WTC11 (cell line): ENCODE measurements at regions of chr11 and their contacts with region 1.

Region 1: GRCh38 chr11:66222358-66223149 is 45.9 kb upstream of the RAB1B start:
- DNase-seq: peak; percentile 94
- ATAC-seq: peak; percentile 96
- H3K4me3 Mint-ChIP-seq: no peak overlapping the region
- H3K27ac Mint-ChIP-seq: peak overlapping the region; percentile 58
- H3K4me1 Mint-ChIP-seq: peaks cover 8% of the 10 kb centered on the region
- H3K27me3 Mint-ChIP-seq: no peaks in the 10 kb centered on the region
- CTCF ChIP-seq: peak; percentile 100

Region 2: DNA sequence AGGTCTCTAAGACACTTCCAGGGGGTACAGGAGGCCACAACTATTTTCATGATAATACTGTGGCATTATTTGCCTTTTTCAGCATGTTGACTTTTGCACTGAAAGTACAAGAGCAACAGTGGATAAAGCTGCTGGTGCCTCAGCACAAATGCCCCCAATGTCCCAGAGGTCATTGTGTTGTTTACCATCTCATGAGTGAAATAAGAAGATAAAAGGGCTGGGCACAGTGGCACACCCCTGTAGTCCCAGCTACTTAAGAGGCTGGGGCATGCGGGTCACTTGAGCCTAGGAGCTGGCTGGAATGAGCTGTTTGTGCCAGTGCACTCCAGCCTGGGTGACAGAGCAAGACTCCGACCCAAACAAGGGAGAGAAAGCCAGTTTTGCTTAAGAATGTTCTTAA is 26.7 kb before region 1 on chr11:
- CTCF ChIA-PET with region 1: interaction called, 10 read pairs
- POLR2A ChIA-PET with region 1: no interaction called
- DNase-seq: no peak
- ATAC-seq: no peak
- H3K4me3 Mint-ChIP-seq: no peak overlapping the region
- H3K27ac Mint-ChIP-seq: no peak overlapping the region
- H3K4me1 Mint-ChIP-seq: peaks cover 6% of the 10 kb centered on the region; the same call in 1 of the 2 replicates
- H3K27me3 Mint-ChIP-seq: no peaks in the 10 kb centered on the region
- CTCF ChIP-seq: no peak

Region 3: DNA sequence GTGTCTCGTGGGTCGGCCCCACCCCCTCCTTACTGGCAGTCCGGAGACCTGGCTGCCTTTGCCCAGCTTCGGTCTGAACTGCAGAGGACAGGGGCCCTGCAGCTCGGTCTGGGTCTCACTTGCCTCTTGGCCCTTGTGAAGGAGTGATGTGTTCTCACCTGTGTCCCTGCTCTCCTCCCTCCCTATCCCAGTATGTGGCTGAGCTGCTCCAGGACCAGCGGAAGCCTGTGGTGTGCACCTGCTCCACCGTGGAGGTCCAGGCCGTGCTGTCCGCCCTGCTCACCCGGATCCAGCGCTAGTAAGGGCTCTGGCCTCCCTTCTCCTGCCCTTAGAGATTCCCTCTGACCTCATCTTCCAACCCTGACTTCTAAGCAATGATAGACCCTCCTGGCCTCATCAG is 10.2 kb after region 1 on chr11:
- CTCF ChIA-PET with region 1: interaction called, 30 read pairs
- POLR2A ChIA-PET with region 1: no interaction called
- DNase-seq: no peak
- ATAC-seq: no peak
- H3K4me3 Mint-ChIP-seq: no peak overlapping the region
- H3K27ac Mint-ChIP-seq: no peak overlapping the region
- H3K4me1 Mint-ChIP-seq: peaks cover 19% of the 10 kb centered on the region
- H3K27me3 Mint-ChIP-seq: no peaks in the 10 kb centered on the region
- CTCF ChIP-seq: no peak

Region 4: GRCh38 chr11:66239998-66240780 is 17.6 kb after region 1 on chr11:
- CTCF ChIA-PET with region 1: interaction called, 30 read pairs
- POLR2A ChIA-PET with region 1: no interaction called
- DNase-seq: no peak
- ATAC-seq: peak; percentile 27
- H3K4me3 Mint-ChIP-seq: no peak overlapping the region
- H3K27ac Mint-ChIP-seq: peak overlapping the region; percentile 25; the same call in 1 of the 2 replicates
- H3K4me1 Mint-ChIP-seq: no peaks in the 10 kb centered on the region
- H3K27me3 Mint-ChIP-seq: no peaks in the 10 kb centered on the region
- CTCF ChIP-seq: no peak

Region 5: GRCh38 chr11:66268283-66268951 is 45.9 kb after region 1 on chr11 and contains the start of gene RAB1B:
- CTCF ChIA-PET with region 1: interaction called, 31 read pairs
- POLR2A ChIA-PET with region 1: interaction called, 4 read pairs
- DNase-seq: peak; percentile 100
- ATAC-seq: peak; percentile 83
- H3K4me3 Mint-ChIP-seq: peak within 1 kb of the TSS; percentile 97
- H3K27ac Mint-ChIP-seq: peak within 1 kb of the TSS; percentile 99
- H3K4me1 Mint-ChIP-seq: peaks cover 12% of the 10 kb centered on the region
- H3K27me3 Mint-ChIP-seq: no peaks in the 10 kb centered on the region; the same call in 1 of the 2 replicates
- CTCF ChIP-seq: no peak
- total RNA-seq, gene RAB1B: 125 to 134 TPM (median 130 TPM) in 3 replicates

Region 6: GRCh38 chr11:66282468-66283386 is 60.2 kb after region 1 on chr11:
- CTCF ChIA-PET with region 1: interaction called, 36 read pairs
- POLR2A ChIA-PET with region 1: no interaction called
- DNase-seq: peak; percentile 100
- ATAC-seq: peak; percentile 79
- H3K4me3 Mint-ChIP-seq: no peak overlapping the region; the same call in 1 of the 2 replicates
- H3K27ac Mint-ChIP-seq: 0 out of 2 replicates have a peak overlapping the region, but pooled peaks have one; percentile 15
- H3K4me1 Mint-ChIP-seq: peaks cover 24% of the 10 kb centered on the region
- H3K27me3 Mint-ChIP-seq: peaks cover 22% of the 10 kb centered on the region
- CTCF ChIP-seq: peak; percentile 98

Region 7: DNA sequence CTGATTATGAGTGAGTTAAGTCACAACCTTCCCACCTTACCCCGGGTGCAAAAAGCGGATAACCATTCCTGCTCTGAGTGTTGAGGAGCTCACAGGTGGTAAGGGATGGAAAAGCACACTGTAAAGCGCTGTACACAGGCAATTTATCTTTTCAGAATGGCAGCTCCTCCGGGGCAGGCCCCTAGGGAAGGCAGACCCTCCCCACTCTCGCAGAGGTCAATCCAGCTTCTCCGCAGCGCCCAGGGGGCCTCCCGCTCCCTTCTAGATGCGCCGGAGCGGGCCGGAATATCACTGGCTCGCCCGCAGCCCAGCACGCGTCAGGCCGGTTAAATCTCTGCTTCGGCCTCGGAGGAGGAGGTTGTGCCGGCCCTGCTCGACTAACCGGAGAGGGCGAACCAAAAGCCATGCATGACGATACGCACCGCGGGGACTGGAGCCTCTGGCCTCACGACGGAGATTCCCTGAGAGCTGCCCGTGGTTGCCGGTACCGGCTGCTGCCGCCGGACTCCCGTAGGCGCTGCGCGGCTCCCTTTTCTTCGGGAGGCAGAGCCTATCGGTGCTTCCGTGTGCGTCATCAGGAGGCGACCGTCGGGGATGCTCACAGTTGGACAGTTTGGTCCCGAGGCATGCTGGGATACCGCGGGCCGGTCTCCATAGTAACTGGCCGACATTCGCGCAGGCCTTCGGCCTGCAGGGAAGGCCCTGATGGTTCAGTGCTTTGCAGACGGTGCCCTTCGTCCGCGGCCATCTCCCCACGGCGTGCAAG is 122.2 kb after region 1 on chr11 and contains the start of gene BRMS1:
- CTCF ChIA-PET with region 1: no interaction called
- POLR2A ChIA-PET with region 1: no interaction called
- DNase-seq: peak; percentile 98
- ATAC-seq: peak; percentile 53
- H3K4me3 Mint-ChIP-seq: peak within 1 kb of the TSS; percentile 96
- H3K27ac Mint-ChIP-seq: peak within 1 kb of the TSS; percentile 95
- H3K4me1 Mint-ChIP-seq: peaks cover 26% of the 10 kb centered on the region
- H3K27me3 Mint-ChIP-seq: peaks cover 4% of the 10 kb centered on the region; the same call in 1 of the 2 replicates
- CTCF ChIP-seq: no peak
- total RNA-seq, gene BRMS1: 37.0 to 44.5 TPM (median 40.8 TPM) in 3 replicates